ENCODE measurements at regions of chr18 and their contacts with region 1.

Region 1: GRCh38 chr18:23943104-23943503 is 71.5 kb upstream of the TTC39C start:
- DNase-seq: peak; percentile 85
- H3K4me3 Mint-ChIP-seq: peak overlapping the region; percentile 56
- H3K27ac Mint-ChIP-seq: peak overlapping the region; percentile 2
- H3K4me1 Mint-ChIP-seq: peaks cover 40% of the 10 kb centered on the region
- H3K27me3 Mint-ChIP-seq: peaks cover 38% of the 10 kb centered on the region

Region 2: DNA sequence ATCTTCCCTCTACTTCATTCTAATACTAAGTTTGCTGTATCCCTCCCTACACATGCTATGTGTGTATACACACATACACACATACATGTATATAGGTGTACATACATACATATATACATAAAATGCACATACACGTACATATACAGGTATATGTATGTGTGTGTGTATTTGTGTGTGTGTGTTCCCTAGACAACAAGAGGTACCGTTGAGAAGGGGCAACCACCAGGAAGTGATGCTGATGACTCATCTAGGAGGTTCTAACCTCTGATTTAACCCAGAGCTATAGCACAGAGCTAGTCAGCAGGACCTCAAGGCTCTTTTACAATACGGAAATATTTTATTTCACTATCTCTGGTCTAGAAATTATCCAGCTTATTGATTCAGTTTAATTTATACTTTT is 114.7 kb before region 1 on chr18:
- intact Hi-C with region 1: no loop called
- DNase-seq: peak; percentile 89
- H3K4me3 Mint-ChIP-seq: no peak overlapping the region
- H3K27ac Mint-ChIP-seq: peak overlapping the region; percentile 79
- H3K4me1 Mint-ChIP-seq: peaks cover 37% of the 10 kb centered on the region
- H3K27me3 Mint-ChIP-seq: peaks cover 3% of the 10 kb centered on the region

Region 3: DNA sequence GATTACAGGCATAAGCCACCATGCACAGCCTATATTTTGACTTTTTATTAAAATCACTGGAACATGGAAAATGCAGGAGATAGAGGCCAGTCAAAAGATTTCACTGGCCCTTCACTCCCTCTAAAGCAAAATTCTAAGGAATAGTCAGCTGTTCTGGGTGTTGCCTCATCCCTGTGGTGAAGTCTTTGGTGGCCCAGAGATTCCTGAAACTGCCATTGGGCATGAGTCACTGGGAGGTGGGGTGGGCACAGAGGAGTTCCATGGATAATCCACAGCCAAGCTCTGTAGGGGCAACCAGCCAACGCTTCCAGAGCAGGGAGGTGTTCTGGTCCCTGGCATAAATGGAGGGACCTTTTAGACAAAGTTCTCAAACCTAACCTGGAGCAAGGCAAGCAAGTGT is 18.3 kb before region 1 on chr18:
- intact Hi-C with region 1: loop called (anchors 1 kb)
- DNase-seq: no peak
- H3K4me3 Mint-ChIP-seq: no peak overlapping the region
- H3K27ac Mint-ChIP-seq: no peak overlapping the region
- H3K4me1 Mint-ChIP-seq: peaks cover 29% of the 10 kb centered on the region
- H3K27me3 Mint-ChIP-seq: peaks cover 16% of the 10 kb centered on the region

Region 4: GRCh38 chr18:23972416-23972815 is 29.3 kb after region 1 on chr18:
- intact Hi-C with region 1: loop called (anchors 2 kb)
- DNase-seq: peak; percentile 64
- H3K4me3 Mint-ChIP-seq: no peak overlapping the region
- H3K27ac Mint-ChIP-seq: no peak overlapping the region
- H3K4me1 Mint-ChIP-seq: peaks cover 26% of the 10 kb centered on the region
- H3K27me3 Mint-ChIP-seq: peaks cover 24% of the 10 kb centered on the region

Region 5: DNA sequence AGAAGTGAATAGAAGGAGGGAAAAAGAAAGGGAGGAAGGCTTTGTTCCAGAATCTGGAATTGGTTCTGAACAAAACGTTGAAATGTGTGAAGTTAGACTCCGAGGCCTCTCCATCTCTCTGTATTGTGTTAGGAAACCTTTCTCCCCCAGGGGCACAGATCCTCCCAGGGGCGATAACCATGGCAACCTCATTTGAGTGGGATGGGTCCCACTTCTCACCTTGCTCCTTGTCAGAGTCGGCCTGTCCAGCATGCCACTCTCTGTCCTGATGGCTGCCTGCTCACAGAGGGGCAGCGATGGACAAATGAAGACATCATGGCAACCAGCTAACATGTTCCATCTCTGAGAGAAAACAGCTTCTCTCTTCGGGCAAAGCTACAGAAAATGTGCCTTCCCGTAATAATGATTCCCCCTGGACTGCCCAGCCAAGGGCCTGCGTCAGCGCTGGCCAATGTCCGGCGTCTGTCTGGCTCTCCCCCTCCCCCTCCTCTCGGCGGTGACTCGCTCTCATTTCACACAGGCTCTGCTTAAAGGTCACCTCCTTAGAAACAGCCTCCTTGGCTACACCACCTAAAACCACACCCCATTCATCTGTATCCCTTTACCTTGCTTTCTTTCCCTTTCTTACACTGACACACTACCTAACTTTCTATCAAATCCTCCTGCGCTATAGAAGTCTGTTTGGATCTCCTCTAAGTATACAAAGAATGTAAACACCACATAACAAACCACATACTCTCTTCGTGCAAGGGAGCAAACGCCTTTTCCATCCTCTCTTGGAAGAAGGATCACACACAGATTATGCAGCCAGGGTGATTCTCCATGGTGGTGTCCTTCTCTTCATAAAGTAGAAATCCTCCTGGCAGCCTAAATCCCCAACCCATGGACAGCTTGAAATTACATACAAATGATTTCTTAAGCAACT is 39.3 kb after region 1 on chr18:
- intact Hi-C with region 1: loop called (anchors 5 kb)
- DNase-seq: no peak
- H3K4me3 Mint-ChIP-seq: no peak overlapping the region
- H3K27ac Mint-ChIP-seq: no peak overlapping the region
- H3K4me1 Mint-ChIP-seq: peaks cover 10% of the 10 kb centered on the region
- H3K27me3 Mint-ChIP-seq: peaks cover 9% of the 10 kb centered on the region

Region 6: GRCh38 chr18:24051031-24051947 is 108.2 kb after region 1 on chr18:
- intact Hi-C with region 1: loop called (anchors 5 kb)
- DNase-seq: peak; percentile 56
- H3K4me3 Mint-ChIP-seq: peak overlapping the region; percentile 64
- H3K27ac Mint-ChIP-seq: peak overlapping the region; percentile 86
- H3K4me1 Mint-ChIP-seq: peaks cover 58% of the 10 kb centered on the region
- H3K27me3 Mint-ChIP-seq: no peaks in the 10 kb centered on the region